Esophagus squamous epithelium (tissue), 5 donors: ENCODE measurements at regions of chr16 and their contacts with region 1.

Region 1: GRCh38 chr16:75764154-75764768 is 38.0 kb upstream of the CPHXL start:
- DNase-seq: no peak
- H3K4me3 ChIP-seq: no peak overlapping the region
- H3K27ac ChIP-seq: no peak overlapping the region
- H3K4me1 ChIP-seq: no peaks in the 10 kb centered on the region
- H3K27me3 ChIP-seq: no peaks in the 10 kb centered on the region
- CTCF ChIP-seq: peak in 5 of 6 experiments; percentile 60 to 83 (median 75)
- POLR2A ChIP-seq: no peak

Region 2: DNA sequence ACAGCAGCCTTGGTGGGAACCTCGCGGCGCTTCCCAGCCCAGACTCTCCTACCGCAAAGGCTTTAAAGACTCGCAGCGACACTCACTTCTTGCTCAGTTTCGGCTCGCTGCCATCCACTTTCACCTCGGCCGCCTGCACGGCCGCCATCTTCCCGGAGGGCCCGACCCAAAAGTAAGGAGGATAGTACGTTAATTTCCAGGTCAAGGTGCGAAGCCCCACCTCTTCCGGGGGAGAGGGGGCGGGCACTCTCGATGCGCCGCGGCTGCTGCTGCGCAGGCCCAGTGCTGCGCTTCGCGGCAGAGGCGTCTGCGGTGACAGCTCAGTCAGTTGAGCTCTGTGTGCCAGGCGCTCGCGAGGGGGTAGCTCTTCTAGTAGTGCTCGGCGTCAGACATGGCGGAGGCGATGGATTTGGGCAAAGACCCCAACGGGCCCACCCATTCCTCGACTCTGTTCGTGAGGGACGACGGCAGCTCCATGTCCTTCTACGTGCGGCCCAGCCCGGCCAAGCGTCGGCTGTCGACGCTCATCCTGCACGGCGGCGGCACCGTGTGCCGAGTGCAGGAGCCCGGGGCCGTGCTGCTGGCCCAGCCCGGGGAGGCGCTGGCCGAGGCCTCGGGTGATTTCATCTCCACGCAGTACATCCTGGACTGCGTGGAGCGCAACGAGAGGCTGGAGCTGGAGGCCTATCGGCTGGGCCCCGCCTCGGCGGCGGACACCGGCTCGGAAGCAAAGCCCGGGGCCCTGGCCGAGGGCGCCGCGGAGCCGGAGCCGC is 116.6 kb before region 1 on chr16 and contains the starts of genes KARS1 and TERF2IP:
- intact Hi-C with region 1: loop called (anchors 5 kb)
- DNase-seq: peak; percentile 63
- H3K4me3 ChIP-seq: peak within 1 kb of the TSS; percentile 85 to 97 (median 94)
- H3K27ac ChIP-seq: peak within 1 kb of the TSS; percentile 94 to 98 (median 97)
- H3K4me1 ChIP-seq: peaks cover 30 to 72% (median 42%) of the 10 kb centered on the region in 3 donors
- H3K27me3 ChIP-seq: no peaks in the 10 kb centered on the region
- CTCF ChIP-seq: peak in 1 of 6 experiments; percentile 18
- POLR2A ChIP-seq: peak in 3 of 4 donors; percentile 95 to 99 (median 95)
- total RNA-seq, gene KARS1: 85.7 to 130 (median 123) TPM
- total RNA-seq, gene TERF2IP: 32.8 to 42.3 (median 36.3) TPM

Region 3: DNA sequence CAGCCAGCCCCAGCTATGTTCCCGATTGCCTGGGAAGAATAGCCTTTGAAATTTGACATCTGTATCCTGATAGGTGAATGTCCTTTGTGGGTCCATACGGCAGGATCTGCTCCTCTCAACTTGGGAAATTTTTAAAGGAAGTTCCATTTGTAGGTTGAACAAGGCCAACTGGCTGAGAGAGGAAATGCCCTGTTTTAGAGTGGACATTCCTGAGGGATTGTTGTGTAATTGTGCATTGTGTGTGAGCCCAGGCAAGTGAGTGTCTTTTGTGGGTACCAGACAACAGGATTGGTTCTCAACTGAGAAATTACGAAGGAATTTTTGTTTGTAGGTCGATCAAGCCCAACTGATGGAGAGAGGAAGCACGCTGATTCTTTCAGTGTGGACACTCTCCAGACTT is 84.9 kb before region 1 on chr16:
- intact Hi-C with region 1: no loop called
- DNase-seq: no peak
- H3K4me3 ChIP-seq: no peak overlapping the region
- H3K27ac ChIP-seq: no peak overlapping the region
- H3K4me1 ChIP-seq: no peaks in the 10 kb centered on the region
- H3K27me3 ChIP-seq: no peaks in the 10 kb centered on the region
- CTCF ChIP-seq: no peak
- POLR2A ChIP-seq: no peak

Region 4: DNA sequence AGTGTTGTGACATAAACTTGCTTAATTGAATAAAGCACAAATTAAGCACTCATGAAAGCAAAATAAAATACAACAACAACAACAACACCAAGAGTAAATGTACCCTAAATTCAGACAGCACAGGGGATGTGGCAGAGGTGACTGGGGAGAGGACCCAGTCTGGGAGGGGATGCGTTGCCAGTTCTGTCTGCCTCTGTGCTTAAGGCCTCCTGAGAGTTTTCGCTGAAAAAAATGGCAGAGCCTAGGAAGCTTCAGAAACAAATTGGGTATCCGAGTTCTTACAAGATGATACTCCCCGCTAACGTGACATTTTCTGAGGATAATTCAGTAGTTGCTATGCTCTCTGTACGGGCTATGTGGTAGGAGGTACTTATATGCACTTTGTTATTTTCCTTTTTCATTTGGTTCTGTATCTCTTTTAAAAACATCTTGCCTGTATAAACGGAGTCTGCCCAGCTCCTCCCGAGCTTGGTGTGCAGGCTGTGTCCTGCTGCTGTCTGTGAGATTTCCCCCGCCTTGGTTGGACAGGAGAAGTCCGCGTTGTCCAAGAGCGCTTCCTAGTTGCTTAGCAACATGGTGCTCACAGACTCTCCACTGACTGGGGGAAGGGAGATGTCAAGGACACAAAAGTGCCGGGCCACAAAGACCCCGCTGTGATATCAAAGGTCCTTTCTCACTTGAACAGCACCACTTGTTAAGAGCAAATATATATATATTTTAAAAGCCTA is 96.2 kb after region 1 on chr16:
- intact Hi-C with region 1: no loop called
- DNase-seq: no peak
- H3K4me3 ChIP-seq: no peak overlapping the region
- H3K27ac ChIP-seq: no peak overlapping the region
- H3K4me1 ChIP-seq: no peaks in the 10 kb centered on the region
- H3K27me3 ChIP-seq: no peaks in the 10 kb centered on the region
- CTCF ChIP-seq: no peak
- POLR2A ChIP-seq: no peak

Region 5: DNA sequence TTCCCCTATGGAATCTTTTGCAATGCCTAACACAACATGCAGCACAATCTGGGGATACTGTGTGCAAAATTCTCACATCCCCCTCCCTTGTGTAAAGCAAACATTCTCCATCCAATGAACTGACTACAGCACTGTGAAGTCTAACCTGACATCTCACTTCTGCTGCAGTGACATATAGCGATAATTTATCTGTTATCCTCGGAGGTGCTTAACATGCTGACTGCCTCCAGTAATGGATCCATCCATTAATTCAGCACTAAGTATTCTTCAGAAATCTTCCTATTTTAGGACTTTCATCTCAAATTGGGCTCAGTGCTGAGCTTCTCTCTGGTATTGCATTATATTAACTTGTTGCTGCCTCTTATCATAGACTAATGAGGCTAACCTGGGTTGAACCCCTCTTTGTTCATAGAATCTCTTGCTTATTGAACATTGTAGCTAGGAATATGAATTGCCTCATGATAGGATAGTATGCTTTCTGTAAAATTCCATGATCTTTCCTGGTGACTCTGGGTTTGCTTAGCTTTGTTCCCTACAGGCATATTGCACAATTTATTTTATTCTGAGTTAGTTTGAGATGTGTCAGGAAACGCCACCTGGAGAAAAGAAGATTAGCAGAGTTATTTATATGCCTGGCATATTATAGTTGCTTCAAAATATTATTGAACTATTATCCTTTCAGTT is 700.8 kb after region 1 on chr16:
- intact Hi-C with region 1: no loop called
- DNase-seq: no peak
- H3K4me3 ChIP-seq: no peak overlapping the region
- H3K27ac ChIP-seq: no peak overlapping the region
- H3K4me1 ChIP-seq: no peaks in the 10 kb centered on the region
- H3K27me3 ChIP-seq: no peaks in the 10 kb centered on the region
- CTCF ChIP-seq: no peak
- POLR2A ChIP-seq: no peak